ENCODE measurements at regions of chr10 and their contacts with region 1.

Region 1: GRCh38 chr10:91694170-91694794 is 61.4 kb upstream of the PPP1R3C start:
- DNase-seq: peak; percentile 48
- H3K4me3 ChIP-seq: no peak overlapping the region
- H3K27ac ChIP-seq: no peak overlapping the region
- H3K4me1 ChIP-seq: peaks cover 23% of the 10 kb centered on the region
- H3K27me3 ChIP-seq: no peaks in the 10 kb centered on the region
- CTCF ChIP-seq: peak; percentile 89 to 95

Region 2: GRCh38 chr10:91493313-91493712 is 201.0 kb before region 1 on chr10:
- CTCF ChIA-PET with region 1: interaction called, 3 read pairs
- dilution Hi-C with region 1: no loop called
- in situ Hi-C with region 1: loop called in 1 of 2 experiments (anchors 10 kb)
- intact Hi-C with region 1: loop called (anchors 1 kb)
- DNase-seq: peak; percentile 21
- H3K4me3 ChIP-seq: no peak overlapping the region
- H3K27ac ChIP-seq: no peak overlapping the region
- H3K4me1 ChIP-seq: no peaks in the 10 kb centered on the region
- H3K27me3 ChIP-seq: no peaks in the 10 kb centered on the region
- CTCF ChIP-seq: peak; percentile 31 to 45

Region 3: GRCh38 chr10:91551856-91552255 is 142.4 kb before region 1 on chr10:
- CTCF ChIA-PET with region 1: no interaction called
- dilution Hi-C with region 1: no loop called
- in situ Hi-C with region 1: no loop called
- intact Hi-C with region 1: loop called (anchors 1 kb)
- DNase-seq: peak; percentile 25
- H3K4me3 ChIP-seq: no peak overlapping the region
- H3K27ac ChIP-seq: no peak overlapping the region
- H3K4me1 ChIP-seq: peaks cover 17% of the 10 kb centered on the region
- H3K27me3 ChIP-seq: no peaks in the 10 kb centered on the region
- CTCF ChIP-seq: peak; percentile 37 to 58

Region 4: DNA sequence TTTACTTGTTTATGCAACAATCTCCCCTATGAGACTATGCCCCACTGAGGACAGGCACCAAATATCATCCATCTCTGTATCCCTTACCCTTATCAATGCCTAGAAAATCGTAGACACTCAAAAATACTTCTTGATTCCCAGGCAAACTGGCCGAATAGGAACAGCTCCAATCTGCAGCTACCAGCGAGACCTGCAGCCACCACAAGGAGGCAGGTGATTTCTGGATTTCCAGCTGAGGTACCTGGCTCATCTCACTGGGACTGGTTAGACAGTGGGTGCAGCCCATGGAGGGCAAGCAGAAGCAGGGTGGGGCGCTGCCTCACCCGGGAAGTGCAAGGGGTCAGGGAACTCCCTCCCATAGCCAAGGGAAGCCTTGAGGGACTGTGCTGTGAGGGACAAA is 50.6 kb before region 1 on chr10:
- CTCF ChIA-PET with region 1: interaction called, 8 read pairs
- dilution Hi-C with region 1: no loop called
- in situ Hi-C with region 1: no loop called
- intact Hi-C with region 1: loop called (anchors 1 kb)
- DNase-seq: peak; percentile 37
- H3K4me3 ChIP-seq: no peak overlapping the region
- H3K27ac ChIP-seq: no peak overlapping the region
- H3K4me1 ChIP-seq: peaks cover 12% of the 10 kb centered on the region
- H3K27me3 ChIP-seq: no peaks in the 10 kb centered on the region
- CTCF ChIP-seq: peak; percentile 53 to 64

Region 5: GRCh38 chr10:91745074-91745832 is 51.0 kb after region 1 on chr10:
- CTCF ChIA-PET with region 1: interaction called, 4 read pairs
- dilution Hi-C with region 1: no loop called
- in situ Hi-C with region 1: no loop called
- intact Hi-C with region 1: loop called (anchors 1 kb)
- DNase-seq: peak; percentile 55
- H3K4me3 ChIP-seq: peak overlapping the region in 2 of 3 experiments; percentile 21 to 34
- H3K27ac ChIP-seq: no peak overlapping the region
- H3K4me1 ChIP-seq: peaks cover 3% of the 10 kb centered on the region
- H3K27me3 ChIP-seq: peaks cover 3% of the 10 kb centered on the region
- CTCF ChIP-seq: peak; percentile 66 to 80

Region 6: GRCh38 chr10:92074126-92074887 is 380.0 kb after region 1 on chr10:
- CTCF ChIA-PET with region 1: no interaction called
- dilution Hi-C with region 1: no loop called
- in situ Hi-C with region 1: no loop called
- intact Hi-C with region 1: no loop called
- DNase-seq: no peak
- H3K4me3 ChIP-seq: no peak overlapping the region
- H3K27ac ChIP-seq: no peak overlapping the region
- H3K4me1 ChIP-seq: peaks cover 6% of the 10 kb centered on the region
- H3K27me3 ChIP-seq: no peaks in the 10 kb centered on the region
- CTCF ChIP-seq: peak; percentile 19 to 35